ENCODE measurements at regions of chr13 and their contacts with region 1.

Region 1: GRCh38 chr13:21638319-21639282 is 32.3 kb upstream of the FGF9 start:
- DNase-seq: peak; percentile 77
- H3K4me3 Mint-ChIP-seq: no peak overlapping the region
- H3K27ac Mint-ChIP-seq: no peak overlapping the region
- H3K4me1 Mint-ChIP-seq: no peaks in the 10 kb centered on the region
- H3K27me3 Mint-ChIP-seq: peaks cover 7% of the 10 kb centered on the region

Region 2: GRCh38 chr13:22278336-22278929 is 639.8 kb after region 1 on chr13:
- intact Hi-C with region 1: loop called (anchors 1 kb)
- DNase-seq: peak; percentile 87
- H3K4me3 Mint-ChIP-seq: no peak overlapping the region
- H3K27ac Mint-ChIP-seq: no peak overlapping the region
- H3K4me1 Mint-ChIP-seq: no peaks in the 10 kb centered on the region
- H3K27me3 Mint-ChIP-seq: no peaks in the 10 kb centered on the region

Region 3: DNA sequence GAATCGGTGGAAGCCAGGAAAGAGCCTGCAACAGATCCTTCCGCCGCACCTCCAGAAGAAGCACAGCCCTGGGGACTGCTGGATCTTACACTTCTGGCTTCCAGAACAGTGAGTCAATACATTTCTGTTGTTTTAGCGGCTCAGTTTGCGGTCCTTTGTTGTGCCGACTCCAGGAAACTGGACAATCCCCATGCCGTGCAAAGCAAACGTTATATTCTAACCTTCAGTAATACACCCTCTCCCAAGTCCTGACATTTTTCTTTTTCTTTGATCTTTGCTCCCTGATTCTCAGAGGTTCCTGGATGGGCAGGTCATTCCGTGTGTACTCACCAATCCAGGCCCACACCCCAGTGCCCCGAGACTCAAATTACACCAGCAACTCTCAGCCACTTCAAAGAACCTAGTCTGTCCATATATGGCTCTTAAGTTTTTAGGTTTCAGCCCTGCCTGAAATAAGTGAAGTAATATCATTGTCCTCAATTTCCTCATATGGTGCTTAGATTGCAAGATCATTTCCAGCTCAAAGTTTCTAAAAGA is 1155.1 kb after region 1 on chr13:
- intact Hi-C with region 1: loop called (anchors 10 kb)
- DNase-seq: no peak
- H3K4me3 Mint-ChIP-seq: no peak overlapping the region
- H3K27ac Mint-ChIP-seq: no peak overlapping the region
- H3K4me1 Mint-ChIP-seq: no peaks in the 10 kb centered on the region
- H3K27me3 Mint-ChIP-seq: no peaks in the 10 kb centered on the region

Measured in activated CD4-positive, alpha-beta T cell treated with anti-CD3 and anti-CD28 coated beads, Interleukin-2, amount 10 ng/mL, durations not matched to agents 24 days and 14 days (primary cell).